ENCODE measurements at regions of chr12 and their contacts with region 1.

Region 1: DNA sequence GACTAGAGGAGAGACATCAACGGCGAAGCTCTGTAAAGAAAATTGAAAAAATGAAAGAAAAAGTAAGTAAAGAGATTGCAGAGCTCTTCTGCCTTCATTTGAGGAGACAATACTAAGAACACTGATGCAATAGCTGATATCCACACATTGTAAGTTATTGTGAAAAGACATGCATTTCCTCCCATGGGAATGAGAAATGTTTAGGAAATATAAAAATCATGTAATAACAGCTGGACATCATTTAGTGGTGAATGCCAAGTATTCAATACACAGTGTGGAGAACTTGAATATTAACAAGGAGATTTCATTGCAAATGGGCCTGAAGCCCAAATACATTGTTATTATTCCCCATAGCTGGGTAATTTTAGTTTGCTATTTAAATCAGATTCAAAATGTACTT is 179.2 kb downstream of the KICS2 start:
- DNase-seq: peak; percentile 91
- H3K4me3 ChIP-seq: peak overlapping the region; percentile 33
- H3K27ac ChIP-seq: peak overlapping the region; percentile 76
- H3K4me1 ChIP-seq: peaks cover 49% of the 10 kb centered on the region
- H3K27me3 ChIP-seq: no peaks in the 10 kb centered on the region
- CTCF ChIP-seq: no peak

Region 2: DNA sequence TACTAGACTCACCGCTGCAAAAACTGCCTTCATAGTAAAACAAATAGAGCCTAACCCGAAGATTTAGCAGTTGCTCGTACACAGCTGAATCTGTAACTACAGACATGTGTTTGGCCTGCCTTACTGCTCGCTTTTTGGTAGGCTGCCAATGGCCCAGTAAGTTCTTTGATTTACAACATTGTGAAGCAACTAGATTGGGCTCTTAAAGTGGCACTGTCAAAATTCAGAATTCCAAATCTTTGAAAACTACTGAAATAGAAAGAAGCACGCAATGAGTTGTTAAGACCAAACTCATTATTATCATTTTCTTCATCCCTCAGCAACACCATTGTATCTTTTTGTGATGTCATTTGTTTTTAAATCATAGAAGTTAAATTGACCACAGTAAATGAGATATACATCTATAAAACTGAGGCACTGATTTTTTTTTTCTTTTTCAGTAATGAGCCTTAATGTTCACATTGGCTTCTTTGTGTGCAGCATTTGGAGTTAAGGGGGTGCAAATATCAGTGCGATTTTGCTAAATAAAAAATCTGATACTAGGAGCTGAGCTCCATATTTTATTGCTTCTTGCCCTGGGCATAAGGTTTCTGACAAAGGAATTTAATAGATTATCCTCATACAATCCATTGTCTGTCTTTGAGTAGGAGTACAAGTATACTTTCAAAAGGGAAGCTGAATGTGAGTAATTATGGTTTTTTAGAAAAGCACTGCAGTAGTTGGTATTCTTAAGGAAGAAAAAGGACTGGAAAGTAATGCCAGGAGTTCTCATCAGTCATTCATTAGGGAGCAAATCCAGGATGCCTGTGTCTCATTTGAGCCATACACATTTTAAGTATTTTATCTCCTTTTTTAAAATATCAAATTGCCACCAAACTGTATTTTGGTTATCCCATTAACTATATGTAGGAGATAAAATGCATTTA is 40.6 kb after region 1 on chr12:
- CTCF ChIA-PET with region 1: no interaction called
- POLR2A ChIA-PET with region 1: no interaction called
- intact Hi-C with region 1: loop called (anchors 5 kb)
- DNase-seq: peak; percentile 94
- H3K4me3 ChIP-seq: peak overlapping the region; percentile 13
- H3K27ac ChIP-seq: peak overlapping the region; percentile 64
- H3K4me1 ChIP-seq: peaks cover 50% of the 10 kb centered on the region
- H3K27me3 ChIP-seq: no peaks in the 10 kb centered on the region
- CTCF ChIP-seq: no peak

Measured in A673 (cell line).